ENCODE measurements at regions of chr5 and their contacts with region 1.

Region 1: DNA sequence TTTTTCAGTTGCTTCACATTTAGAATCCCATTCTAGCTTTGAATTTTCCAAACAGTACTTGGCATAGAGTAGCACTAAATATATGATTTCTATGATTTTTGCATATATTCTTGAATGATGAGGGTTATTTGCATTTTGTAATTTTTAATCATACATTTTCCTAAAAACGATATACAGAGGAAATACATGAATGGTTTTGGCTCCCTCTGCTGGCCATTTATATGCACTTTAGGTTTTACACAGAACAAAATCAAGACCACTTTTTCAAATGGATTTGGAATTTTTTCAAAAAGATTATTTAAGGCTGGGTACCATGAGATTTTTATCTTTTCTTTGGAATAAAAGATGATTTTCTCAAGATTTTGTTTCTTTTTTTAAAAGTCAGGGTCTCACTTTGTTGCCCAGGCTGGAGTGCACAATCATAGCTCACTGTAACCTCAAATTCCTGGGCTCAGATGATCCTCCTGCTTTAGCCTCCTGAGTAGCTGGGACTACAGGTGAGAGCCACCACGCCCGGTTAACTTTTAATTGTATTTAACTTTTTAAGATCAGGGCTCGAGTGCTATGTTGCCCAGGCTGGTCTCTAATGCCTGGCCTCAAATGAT is 16.7 kb upstream of the COMMD10 start:
- DNase-seq: peak; percentile 19
- H3K4me3 ChIP-seq: no peak overlapping the region
- CTCF ChIP-seq: peak; percentile 53

Region 2: GRCh38 chr5:115634343-115635132 is 433.6 kb before region 1 on chr5:
- CTCF ChIA-PET with region 1: interaction called, 28 read pairs
- POLR2A ChIA-PET with region 1: no interaction called
- DNase-seq: no peak
- H3K4me3 ChIP-seq: peak overlapping the region; percentile 43
- CTCF ChIP-seq: peak; percentile 87

Region 3: DNA sequence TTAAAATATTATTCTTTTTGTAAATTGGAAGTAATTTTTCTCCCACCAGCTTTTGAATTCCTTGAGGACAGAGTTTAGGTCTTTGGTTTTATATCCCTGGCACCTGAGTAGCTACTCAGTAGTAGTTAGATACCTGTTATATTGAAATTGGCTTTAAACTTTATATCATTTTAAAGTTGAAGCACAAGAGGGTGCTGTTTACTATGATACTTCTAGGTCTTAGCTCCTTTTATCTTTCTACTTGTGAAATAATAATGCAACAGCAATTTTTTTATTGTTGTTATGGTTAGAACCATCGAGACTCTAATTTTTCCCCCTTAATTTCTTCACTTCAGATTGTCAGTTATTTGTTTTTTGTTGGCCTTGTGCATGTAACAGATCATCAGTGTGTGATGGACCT is 180.1 kb before region 1 on chr5:
- CTCF ChIA-PET with region 1: interaction called, 40 read pairs
- POLR2A ChIA-PET with region 1: no interaction called
- DNase-seq: no peak
- H3K4me3 ChIP-seq: no peak overlapping the region
- CTCF ChIP-seq: no peak

Region 4: GRCh38 chr5:115895821-115896220 is 172.3 kb before region 1 on chr5:
- CTCF ChIA-PET with region 1: interaction called, 30 read pairs
- POLR2A ChIA-PET with region 1: no interaction called
- DNase-seq: no peak
- H3K4me3 ChIP-seq: no peak overlapping the region
- CTCF ChIP-seq: no peak

Region 5: GRCh38 chr5:115962503-115963402 is 105.4 kb before region 1 on chr5:
- CTCF ChIA-PET with region 1: interaction called, 11 read pairs
- POLR2A ChIA-PET with region 1: no interaction called
- DNase-seq: no peak
- H3K4me3 ChIP-seq: peak overlapping the region; percentile 44
- CTCF ChIP-seq: no peak

Region 6: GRCh38 chr5:116078199-116078598 is 10.1 kb after region 1 on chr5:
- CTCF ChIA-PET with region 1: interaction called, 14 read pairs
- POLR2A ChIA-PET with region 1: no interaction called
- DNase-seq: no peak
- H3K4me3 ChIP-seq: no peak overlapping the region
- CTCF ChIP-seq: no peak

Measured in AG04449 (cell line).